ENCODE measurements at regions of chr19 and their contacts with region 1.

Region 1: DNA sequence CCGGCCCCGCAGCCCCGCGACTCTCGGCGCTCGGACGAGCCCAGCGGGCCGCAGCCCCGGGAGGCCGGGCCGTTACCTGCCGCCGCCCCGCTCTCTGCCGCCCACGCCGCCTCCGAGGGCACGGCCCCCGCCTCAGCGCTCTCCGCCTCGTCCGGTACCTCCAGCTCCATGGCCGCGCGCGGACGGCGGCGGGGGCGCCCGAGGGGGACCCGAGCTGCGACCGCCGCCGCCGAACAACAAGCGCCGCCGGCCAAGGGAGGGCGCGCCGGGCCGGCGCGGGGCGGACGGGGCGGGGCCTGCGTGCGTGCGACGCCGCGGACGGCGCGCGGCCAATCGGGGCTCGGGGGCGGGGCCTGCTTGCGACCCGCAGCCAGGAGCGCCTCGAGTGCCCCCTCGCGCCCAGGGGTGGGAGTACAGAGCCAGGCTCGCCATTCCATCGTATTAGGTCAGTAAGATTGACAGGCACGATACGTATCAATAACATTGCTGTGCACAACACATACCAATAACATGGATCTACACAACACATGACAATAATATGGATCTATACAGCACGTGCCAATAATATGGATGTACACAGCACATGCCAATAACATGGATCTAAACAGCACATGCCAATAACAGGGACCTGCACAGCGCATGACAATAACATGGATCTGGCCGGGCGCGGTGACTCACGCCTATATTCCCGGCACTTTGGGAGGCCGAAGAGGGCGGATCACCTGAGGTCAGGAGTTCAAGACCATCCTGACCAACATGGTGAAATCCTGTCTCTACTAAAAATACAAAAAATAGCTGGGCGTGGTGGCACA is at the start of gene PIP5K1C:
- DNase-seq: peak; percentile 94
- H3K4me3 ChIP-seq: peak within 1 kb of the TSS; percentile 81 to 94
- H3K27ac ChIP-seq: peak within 1 kb of the TSS; percentile 74 to 89
- H3K4me1 ChIP-seq: peaks cover 13% of the 10 kb centered on the region
- H3K27me3 ChIP-seq: no peaks in the 10 kb centered on the region
- CTCF ChIP-seq: peak; percentile 68 to 97 (median 81)
- POLR2A ChIP-seq: no peak
- total RNA-seq, gene PIP5K1C: 80.2 to 87.0 TPM

Region 2: GRCh38 chr19:3670796-3671679 is 29.4 kb before region 1 on chr19:
- intact Hi-C with region 1: loop called (anchors 2 kb)
- DNase-seq: peak; percentile 70
- H3K4me3 ChIP-seq: no peak overlapping the region
- H3K27ac ChIP-seq: peak overlapping the region; percentile 90 to 97
- H3K4me1 ChIP-seq: peaks cover 39% of the 10 kb centered on the region
- H3K27me3 ChIP-seq: no peaks in the 10 kb centered on the region
- CTCF ChIP-seq: no peak
- POLR2A ChIP-seq: no peak

Measured in testis (tissue), 5 donors.